Calu3 (cell line): ENCODE measurements at regions of chr11 and their contacts with region 1.

Region 1: DNA sequence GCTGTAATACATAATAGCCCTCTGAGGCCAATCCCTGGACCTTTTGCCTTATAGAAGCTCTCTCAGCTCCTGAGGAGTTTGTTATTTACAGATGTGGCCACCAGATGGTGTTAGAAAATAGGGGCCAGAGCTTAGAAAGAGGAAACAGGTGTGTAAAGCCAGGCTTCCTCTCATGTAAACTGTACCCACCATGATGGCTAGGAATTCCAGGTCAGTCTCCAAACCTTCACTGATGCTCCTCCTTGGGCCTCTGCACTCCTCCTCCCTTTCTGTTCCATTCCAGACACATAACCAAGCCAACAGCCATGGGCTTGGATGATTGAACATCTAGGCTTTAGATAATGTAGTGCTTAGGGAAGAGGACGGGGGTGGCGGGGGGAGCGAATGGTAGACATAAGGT is 39.7 kb downstream of the USP35 start:
- DNase-seq: peak; percentile 45
- H3K4me3 Mint-ChIP-seq: no peak overlapping the region
- H3K27ac Mint-ChIP-seq: no peak overlapping the region
- H3K4me1 Mint-ChIP-seq: no peaks in the 10 kb centered on the region
- H3K27me3 Mint-ChIP-seq: no peaks in the 10 kb centered on the region
- CTCF ChIP-seq: no peak

Region 2: GRCh38 chr11:78112582-78113275 is 115.7 kb before region 1 on chr11:
- CTCF ChIA-PET with region 1: no interaction called
- intact Hi-C with region 1: no loop called
- DNase-seq: no peak
- H3K4me3 Mint-ChIP-seq: no peak overlapping the region
- H3K27ac Mint-ChIP-seq: no peak overlapping the region
- H3K4me1 Mint-ChIP-seq: no peaks in the 10 kb centered on the region
- H3K27me3 Mint-ChIP-seq: no peaks in the 10 kb centered on the region
- CTCF ChIP-seq: no peak

Region 3: DNA sequence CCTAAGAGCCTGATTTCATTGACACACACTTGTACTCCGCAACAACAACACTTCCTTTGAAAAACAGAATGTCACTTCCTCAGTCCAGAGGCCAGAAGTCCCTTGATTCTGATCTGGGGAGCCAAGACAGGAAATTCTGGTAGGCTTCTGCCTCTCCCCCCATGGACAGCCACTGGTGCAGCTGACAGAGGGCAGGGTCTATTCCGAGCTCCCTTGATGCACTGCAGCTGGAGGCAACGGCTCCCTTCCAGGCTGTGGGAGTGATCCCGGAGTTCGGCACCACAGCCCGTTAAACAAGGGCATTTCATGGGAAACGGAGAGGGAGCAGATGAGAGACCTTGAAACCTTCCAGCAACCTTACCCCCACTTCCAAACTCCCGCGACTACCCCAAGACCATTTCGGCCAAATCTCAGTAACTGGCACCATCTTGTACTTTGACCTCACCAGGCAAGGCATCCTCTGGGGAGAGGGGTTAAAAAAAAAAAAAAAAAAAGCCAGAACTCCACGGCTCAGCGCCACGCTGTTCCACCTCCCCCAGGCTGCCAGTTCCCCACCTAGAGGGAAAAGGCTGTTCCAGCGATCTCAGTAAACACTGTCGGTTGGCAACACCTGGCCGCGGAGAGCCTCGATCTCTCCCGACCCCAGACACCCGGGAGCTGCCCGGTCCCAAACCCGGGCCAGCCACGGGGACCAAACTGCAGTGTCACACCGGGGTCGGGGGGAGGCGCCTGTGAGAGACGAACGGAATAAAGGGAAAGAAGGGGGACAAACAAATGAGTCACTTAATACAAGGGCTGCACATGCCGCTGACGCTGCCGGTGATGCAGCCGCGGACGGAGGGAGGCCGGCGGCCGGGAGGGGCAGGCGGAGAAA is 188.1 kb after region 1 on chr11:
- CTCF ChIA-PET with region 1: interaction called, 8 read pairs
- intact Hi-C with region 1: loop called (anchors 2 kb)
- DNase-seq: peak; percentile 88
- H3K4me3 Mint-ChIP-seq: peak overlapping the region; percentile 93
- H3K27ac Mint-ChIP-seq: peak overlapping the region; percentile 73
- H3K4me1 Mint-ChIP-seq: peaks cover 42% of the 10 kb centered on the region
- H3K27me3 Mint-ChIP-seq: peaks cover 7% of the 10 kb centered on the region
- CTCF ChIP-seq: peak; percentile 61

Region 4: GRCh38 chr11:78432058-78432515 is 203.6 kb after region 1 on chr11:
- CTCF ChIA-PET with region 1: interaction called, 10 read pairs
- intact Hi-C with region 1: no loop called
- DNase-seq: peak; percentile 36
- H3K4me3 Mint-ChIP-seq: no peak overlapping the region
- H3K27ac Mint-ChIP-seq: no peak overlapping the region
- H3K4me1 Mint-ChIP-seq: no peaks in the 10 kb centered on the region
- H3K27me3 Mint-ChIP-seq: no peaks in the 10 kb centered on the region
- CTCF ChIP-seq: peak; percentile 50

Region 5: GRCh38 chr11:78564490-78565467 is 336.3 kb after region 1 on chr11:
- CTCF ChIA-PET with region 1: interaction called, 36 read pairs
- intact Hi-C with region 1: loop called (anchors 1 kb)
- DNase-seq: peak; percentile 43
- H3K4me3 Mint-ChIP-seq: no peak overlapping the region
- H3K27ac Mint-ChIP-seq: no peak overlapping the region
- H3K4me1 Mint-ChIP-seq: no peaks in the 10 kb centered on the region
- H3K27me3 Mint-ChIP-seq: no peaks in the 10 kb centered on the region
- CTCF ChIP-seq: peak; percentile 52